ENCODE measurements at regions of chr3 and their contacts with region 1.

Region 1: GRCh38 chr3:187714404-187714979 is 12.1 kb upstream of the RTP2 start:
- DNase-seq: peak; percentile 92
- H3K4me3 Mint-ChIP-seq: no peak overlapping the region
- H3K27ac Mint-ChIP-seq: no peak overlapping the region
- H3K4me1 Mint-ChIP-seq: peaks cover 9% of the 10 kb centered on the region
- H3K27me3 Mint-ChIP-seq: peaks cover 14% of the 10 kb centered on the region

Region 2: GRCh38 chr3:187223799-187224198 is 490.7 kb before region 1 on chr3:
- intact Hi-C with region 1: loop called (anchors 1 kb)
- DNase-seq: no peak
- H3K4me3 Mint-ChIP-seq: no peak overlapping the region
- H3K27ac Mint-ChIP-seq: no peak overlapping the region
- H3K4me1 Mint-ChIP-seq: no peaks in the 10 kb centered on the region
- H3K27me3 Mint-ChIP-seq: peaks cover 11% of the 10 kb centered on the region

Region 3: DNA sequence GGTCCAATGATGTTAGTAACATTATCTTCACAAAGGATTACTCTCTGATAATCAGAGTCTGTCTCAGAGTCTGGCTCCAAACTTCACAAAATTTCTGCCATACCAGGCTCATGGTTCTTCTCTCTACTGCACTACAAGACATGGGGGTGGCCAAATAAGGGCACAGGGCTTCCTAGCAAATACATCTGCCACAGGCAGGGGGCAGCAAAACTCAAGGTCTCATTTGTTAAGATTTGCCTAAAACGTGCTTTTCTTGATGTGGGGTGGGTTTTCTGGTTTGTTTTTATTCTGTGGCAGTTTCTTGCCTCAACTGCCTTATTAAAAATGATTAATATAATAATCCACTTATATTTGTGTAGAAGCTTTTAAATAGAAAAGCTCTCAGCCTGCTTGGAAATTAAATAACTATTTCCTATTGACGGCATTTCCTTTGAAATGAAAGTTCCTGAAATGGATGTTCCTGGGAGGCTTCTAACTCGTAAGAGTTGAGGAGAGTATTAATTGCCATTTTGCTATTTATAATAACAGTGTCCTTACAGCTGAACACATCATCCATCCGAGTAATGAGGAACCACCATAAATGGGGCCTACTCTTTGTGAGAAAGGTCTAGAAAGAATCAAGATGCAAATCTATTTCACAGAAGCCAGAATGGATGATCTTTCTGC is 98.1 kb before region 1 on chr3:
- intact Hi-C with region 1: loop called (anchors 1 kb)
- DNase-seq: peak; percentile 84
- H3K4me3 Mint-ChIP-seq: no peak overlapping the region
- H3K27ac Mint-ChIP-seq: no peak overlapping the region
- H3K4me1 Mint-ChIP-seq: no peaks in the 10 kb centered on the region
- H3K27me3 Mint-ChIP-seq: peaks cover 16% of the 10 kb centered on the region

Region 4: DNA sequence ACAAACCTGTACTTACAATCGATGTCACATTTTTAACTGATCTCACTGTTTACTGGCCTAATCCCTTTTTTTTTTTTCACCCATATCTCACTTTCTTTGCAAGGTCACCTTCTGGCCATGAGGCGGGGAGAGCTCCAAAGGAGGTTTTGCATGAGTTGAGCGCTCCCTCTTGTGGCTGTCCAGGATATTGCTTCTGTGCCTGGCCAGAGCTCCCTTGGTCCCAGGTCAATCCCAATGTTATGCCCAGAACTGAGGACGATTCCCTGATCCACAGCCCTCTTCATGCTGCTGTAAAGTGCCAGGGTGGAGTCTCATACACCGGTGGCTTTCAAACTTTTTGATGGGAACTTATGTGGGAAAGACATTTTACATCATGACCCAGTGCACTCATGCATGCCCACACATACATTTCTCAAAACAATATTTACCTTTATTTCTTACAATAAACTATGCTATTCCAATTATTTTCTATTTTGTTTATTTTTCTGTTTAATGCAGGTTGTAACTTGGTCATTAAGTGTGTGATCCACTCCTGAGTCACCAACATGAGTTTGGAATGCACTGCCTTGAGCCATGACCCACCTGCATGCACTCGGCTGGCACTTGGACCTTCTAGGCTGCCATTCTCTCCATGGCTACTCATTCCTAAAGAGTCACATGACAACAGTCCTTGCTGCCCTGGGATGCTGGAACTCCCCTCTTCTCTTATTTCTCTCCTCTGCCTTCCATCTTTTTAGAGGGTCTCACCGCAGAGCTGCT is 34.7 kb before region 1 on chr3:
- intact Hi-C with region 1: loop called (anchors 1 kb)
- DNase-seq: peak; percentile 90
- H3K4me3 Mint-ChIP-seq: no peak overlapping the region
- H3K27ac Mint-ChIP-seq: no peak overlapping the region
- H3K4me1 Mint-ChIP-seq: peaks cover 7% of the 10 kb centered on the region
- H3K27me3 Mint-ChIP-seq: peaks cover 41% of the 10 kb centered on the region